Activated B cell treated with CpG ODN at 0.5 μM for 24 hours (primary cell): ENCODE measurements at regions of chr6 and their contacts with region 1.

Region 1: DNA sequence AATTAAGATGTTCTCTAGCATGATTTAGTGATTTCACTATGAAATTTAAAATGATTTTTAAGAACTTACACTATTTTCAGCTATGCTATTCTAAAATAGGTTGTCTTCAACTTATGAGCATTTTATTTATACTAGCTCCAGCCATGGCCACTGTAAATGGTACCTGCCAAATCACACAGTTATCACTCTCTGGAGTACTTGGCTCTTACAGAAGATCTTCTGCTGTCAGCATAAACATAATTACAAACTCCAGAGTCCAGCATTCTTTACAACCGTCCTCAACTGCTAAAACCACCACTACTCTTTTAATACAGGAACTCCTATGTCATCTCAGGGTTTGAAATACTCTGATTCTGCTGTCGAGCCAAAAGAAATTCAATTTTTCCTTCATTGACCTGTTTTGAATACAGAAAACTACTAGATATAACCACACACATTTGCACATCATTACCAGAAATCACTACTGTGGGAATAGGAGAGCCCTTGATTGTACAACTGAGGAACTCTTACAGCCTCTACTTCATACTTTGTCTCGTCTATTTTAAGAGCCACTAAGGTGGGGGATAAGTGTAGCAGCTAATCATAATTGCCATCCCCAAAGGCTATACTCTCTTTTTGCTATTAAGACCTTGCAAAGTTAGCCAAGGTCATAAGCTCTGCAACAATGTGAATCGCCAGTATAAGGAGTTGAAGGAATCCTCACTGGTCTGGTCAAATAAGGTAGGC is 93.7 kb downstream of the PHIP start:
- DNase-seq: no peak
- ATAC-seq: no peak
- H3K4me3 Mint-ChIP-seq: no peak overlapping the region
- H3K27ac Mint-ChIP-seq: no peak overlapping the region
- H3K4me1 Mint-ChIP-seq: no peaks in the 10 kb centered on the region
- H3K27me3 Mint-ChIP-seq: no peaks in the 10 kb centered on the region
- CTCF ChIP-seq: no peak

Region 2: GRCh38 chr6:78995946-78996345 is 11.6 kb after region 1 on chr6:
- CTCF ChIA-PET with region 1: interaction called, 3 read pairs
- POLR2A ChIA-PET with region 1: no interaction called
- intact Hi-C with region 1: loop called (anchors 2 kb)
- DNase-seq: no peak
- ATAC-seq: no peak
- H3K4me3 Mint-ChIP-seq: no peak overlapping the region
- H3K27ac Mint-ChIP-seq: no peak overlapping the region
- H3K4me1 Mint-ChIP-seq: no peaks in the 10 kb centered on the region
- H3K27me3 Mint-ChIP-seq: no peaks in the 10 kb centered on the region
- CTCF ChIP-seq: no peak